ENCODE measurements at regions of chr1 and their contacts with region 1.

Region 1: GRCh38 chr1:235993652-235994051 is 71.2 kb downstream of the NID1 start:
- DNase-seq: no peak
- ATAC-seq: no peak
- H3K4me3 Mint-ChIP-seq: no peak overlapping the region
- H3K27ac Mint-ChIP-seq: no peak overlapping the region
- H3K4me1 Mint-ChIP-seq: no peaks in the 10 kb centered on the region
- H3K27me3 Mint-ChIP-seq: peaks cover 6% of the 10 kb centered on the region; the same call in 1 of the 2 replicates
- CTCF ChIP-seq: no peak

Region 2: DNA sequence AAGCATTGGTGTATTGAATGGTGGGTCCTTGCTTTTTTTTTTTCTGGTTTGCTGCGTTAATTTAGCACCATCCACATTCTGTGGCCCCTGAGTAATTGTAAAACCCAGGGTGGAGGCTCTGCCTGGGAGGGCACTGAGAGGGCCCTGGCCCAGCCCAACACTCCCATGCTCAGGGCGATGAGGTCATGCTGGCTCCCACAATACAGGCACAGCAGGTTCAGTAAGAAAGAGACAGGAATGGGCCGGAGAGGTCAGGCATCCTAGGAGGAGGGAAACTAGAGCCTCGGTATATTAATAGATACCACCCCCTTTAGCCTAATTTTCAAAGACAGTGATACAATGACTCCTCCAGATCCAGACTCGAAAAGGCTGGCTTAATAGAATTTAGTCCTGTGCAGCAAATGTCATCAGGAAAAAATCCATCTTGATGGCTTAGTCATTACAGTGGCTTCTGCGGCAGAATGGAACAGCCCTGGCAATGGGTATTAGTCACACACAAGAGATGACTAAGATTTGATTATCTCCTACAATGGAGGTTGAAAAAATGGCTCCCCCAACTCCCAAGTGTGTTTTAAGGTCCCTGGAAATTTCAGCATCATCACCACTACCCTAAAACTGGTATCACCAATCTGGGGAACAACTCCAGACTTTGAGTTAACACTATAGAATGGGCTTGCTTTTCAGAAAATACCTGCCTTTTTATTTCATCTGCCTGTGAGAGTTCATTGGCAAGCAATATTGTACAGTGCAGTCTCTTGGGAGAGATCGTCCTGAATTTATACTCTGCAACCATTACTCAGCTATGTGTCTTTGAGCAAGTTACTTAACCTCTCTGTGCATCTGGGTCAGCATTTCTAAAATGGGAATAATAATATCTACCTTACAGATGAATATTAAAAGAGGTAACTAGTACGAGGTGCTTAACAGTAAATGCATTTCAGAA is 83.0 kb before region 1 on chr1:
- CTCF ChIA-PET with region 1: no interaction called
- POLR2A ChIA-PET with region 1: no interaction called
- DNase-seq: peak; percentile 40
- ATAC-seq: peak; percentile 98
- H3K4me3 Mint-ChIP-seq: no peak overlapping the region
- H3K27ac Mint-ChIP-seq: no peak overlapping the region
- H3K4me1 Mint-ChIP-seq: peaks cover 11% of the 10 kb centered on the region
- H3K27me3 Mint-ChIP-seq: no peaks in the 10 kb centered on the region; the same call in 1 of the 2 replicates
- CTCF ChIP-seq: no peak

Region 3: GRCh38 chr1:235946571-235946981 is 47.1 kb before region 1 on chr1:
- CTCF ChIA-PET with region 1: no interaction called
- POLR2A ChIA-PET with region 1: no interaction called
- DNase-seq: no peak
- ATAC-seq: no peak; the same call in 1 of the 2 replicates
- H3K4me3 Mint-ChIP-seq: no peak overlapping the region
- H3K27ac Mint-ChIP-seq: no peak overlapping the region
- H3K4me1 Mint-ChIP-seq: no peaks in the 10 kb centered on the region
- H3K27me3 Mint-ChIP-seq: no peaks in the 10 kb centered on the region
- CTCF ChIP-seq: no peak

Region 4: GRCh38 chr1:235960809-235961208 is 32.8 kb before region 1 on chr1:
- CTCF ChIA-PET with region 1: no interaction called
- POLR2A ChIA-PET with region 1: interaction called, 10 read pairs
- DNase-seq: no peak
- ATAC-seq: no peak
- H3K4me3 Mint-ChIP-seq: no peak overlapping the region
- H3K27ac Mint-ChIP-seq: no peak overlapping the region
- H3K4me1 Mint-ChIP-seq: no peaks in the 10 kb centered on the region
- H3K27me3 Mint-ChIP-seq: no peaks in the 10 kb centered on the region
- CTCF ChIP-seq: no peak

Region 5: GRCh38 chr1:236214761-236215160 is 221.1 kb after region 1 on chr1:
- CTCF ChIA-PET with region 1: no interaction called
- POLR2A ChIA-PET with region 1: no interaction called
- DNase-seq: no peak
- ATAC-seq: no peak
- H3K4me3 Mint-ChIP-seq: no peak overlapping the region
- H3K27ac Mint-ChIP-seq: no peak overlapping the region
- H3K4me1 Mint-ChIP-seq: no peaks in the 10 kb centered on the region
- H3K27me3 Mint-ChIP-seq: no peaks in the 10 kb centered on the region
- CTCF ChIP-seq: no peak

Region 6: GRCh38 chr1:236515443-236515958 is 521.8 kb after region 1 on chr1:
- CTCF ChIA-PET with region 1: no interaction called
- POLR2A ChIA-PET with region 1: interaction called, 10 read pairs
- DNase-seq: no peak
- ATAC-seq: no peak
- H3K4me3 Mint-ChIP-seq: no peak overlapping the region
- H3K27ac Mint-ChIP-seq: no peak overlapping the region
- H3K4me1 Mint-ChIP-seq: peaks cover 16% of the 10 kb centered on the region
- H3K27me3 Mint-ChIP-seq: no peaks in the 10 kb centered on the region; the same call in 1 of the 2 replicates
- CTCF ChIP-seq: no peak